Ovary (tissue), 10 donors: ENCODE measurements at regions of chrX and their contacts with region 1.

Region 1: DNA sequence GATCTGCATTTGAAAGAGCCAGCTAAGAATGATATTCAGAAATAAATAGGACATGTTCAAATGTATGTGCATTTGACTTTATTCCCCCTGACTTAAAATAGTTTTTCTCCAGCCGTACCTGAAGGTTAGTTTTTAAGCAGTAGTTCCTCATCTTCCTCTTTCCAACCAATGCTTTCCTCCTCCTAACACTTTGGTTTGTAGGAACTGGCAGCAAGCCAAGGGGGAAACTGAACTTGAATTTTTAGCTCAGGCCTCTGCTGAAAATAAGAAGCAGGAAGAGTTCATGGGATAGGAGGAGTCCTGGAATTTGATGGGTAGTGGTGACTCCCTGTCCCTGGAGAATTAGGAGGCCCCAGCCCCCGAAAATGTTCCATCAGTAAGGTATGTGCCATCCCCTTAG is 36.9 kb downstream of the BCORL1 start:
- DNase-seq: no peak
- H3K4me3 ChIP-seq: no peak overlapping the region
- H3K27ac ChIP-seq: no peak overlapping the region
- H3K4me1 ChIP-seq: peaks cover 1% of the 10 kb centered on the region
- H3K27me3 ChIP-seq: no peaks in the 10 kb centered on the region
- CTCF ChIP-seq: no peak
- EP300 ChIP-seq: no peak
- POLR2A ChIP-seq: no peak

Region 2: DNA sequence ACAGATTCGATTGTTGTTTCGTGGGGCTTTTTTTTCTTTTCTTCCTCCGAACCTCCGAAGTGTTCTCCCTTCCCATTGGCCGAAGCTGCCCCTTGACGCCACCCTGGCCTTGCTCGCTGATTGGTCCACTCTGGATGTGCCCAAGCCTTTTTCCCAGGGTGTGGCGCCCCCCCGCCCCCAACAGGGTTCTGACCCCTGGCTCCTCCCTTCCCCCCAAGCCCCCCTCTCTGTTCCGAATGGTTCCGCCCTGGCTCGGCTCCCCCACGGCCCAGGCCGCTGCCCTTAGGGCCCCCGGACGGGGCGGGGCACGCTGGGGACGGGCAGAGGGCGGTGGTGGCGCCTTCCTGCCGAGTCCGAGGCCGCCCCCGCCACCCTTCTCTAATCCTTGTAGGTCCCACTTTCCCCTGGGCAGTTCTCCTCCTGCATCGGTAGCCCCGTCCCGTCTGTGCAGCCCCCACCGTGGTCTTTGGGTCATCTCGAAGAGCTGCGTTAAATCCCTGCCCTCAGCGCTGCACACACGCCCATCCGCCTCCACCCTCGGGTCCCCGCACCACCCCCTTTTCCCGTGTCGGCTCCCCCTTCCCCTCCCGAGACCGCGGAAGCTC is 87.8 kb before region 1 on chrX:
- intact Hi-C with region 1: loop called in 1 of 4 experiments (anchors 10 kb)
- DNase-seq: peak; percentile 88 to 93 (median 92)
- H3K4me3 ChIP-seq: peak overlapping the region; percentile 47
- H3K27ac ChIP-seq: peak overlapping the region; percentile 79 to 91
- H3K4me1 ChIP-seq: no peaks in the 10 kb centered on the region
- H3K27me3 ChIP-seq: no peaks in the 10 kb centered on the region
- CTCF ChIP-seq: no peak
- EP300 ChIP-seq: no peak
- POLR2A ChIP-seq: no peak